HAP-1 (cell line): ENCODE measurements at regions of chr9 and their contacts with region 1.

Region 1: GRCh38 chr9:17082343-17083064 is 52.3 kb upstream of the CNTLN start:
- DNase-seq: peak; percentile 41 to 57
- H3K4me3 ChIP-seq: no peak overlapping the region
- H3K4me1 ChIP-seq: peaks cover 8% of the 10 kb centered on the region
- H3K27me3 ChIP-seq: no peaks in the 10 kb centered on the region

Region 2: GRCh38 chr9:16784002-16784401 is 298.5 kb before region 1 on chr9:
- in situ Hi-C with region 1: no loop called
- DNase-seq: no peak
- H3K4me3 ChIP-seq: no peak overlapping the region
- H3K4me1 ChIP-seq: peaks cover 5% of the 10 kb centered on the region; the same call in 1 of the 2 replicates
- H3K27me3 ChIP-seq: no peaks in the 10 kb centered on the region

Region 3: GRCh38 chr9:17462869-17463464 is 380.5 kb after region 1 on chr9:
- in situ Hi-C with region 1: loop called (anchors 25 kb)
- DNase-seq: peak; percentile 64 to 78
- H3K4me3 ChIP-seq: no peak overlapping the region
- H3K4me1 ChIP-seq: no peaks in the 10 kb centered on the region
- H3K27me3 ChIP-seq: no peaks in the 10 kb centered on the region